ENCODE measurements at regions of chr10 and their contacts with region 1.

Region 1: GRCh38 chr10:73096449-73097304 is at the start of gene P4HA1:
- DNase-seq: peak; percentile 97
- H3K4me3 Mint-ChIP-seq: peak within 1 kb of the TSS; percentile 96
- H3K27ac Mint-ChIP-seq: peak within 1 kb of the TSS; percentile 94
- H3K4me1 Mint-ChIP-seq: peaks cover 46% of the 10 kb centered on the region
- H3K27me3 Mint-ChIP-seq: peaks cover 2% of the 10 kb centered on the region
- total RNA-seq, gene P4HA1: 52.8 and 54.5 TPM in 2 replicates

Region 2: GRCh38 chr10:73060738-73061635 is 35.7 kb before region 1 on chr10:
- intact Hi-C with region 1: loop called (anchors 1 kb)
- DNase-seq: no peak
- H3K4me3 Mint-ChIP-seq: no peak overlapping the region
- H3K27ac Mint-ChIP-seq: peak overlapping the region; percentile 18
- H3K4me1 Mint-ChIP-seq: peaks cover 19% of the 10 kb centered on the region
- H3K27me3 Mint-ChIP-seq: no peaks in the 10 kb centered on the region

Region 3: DNA sequence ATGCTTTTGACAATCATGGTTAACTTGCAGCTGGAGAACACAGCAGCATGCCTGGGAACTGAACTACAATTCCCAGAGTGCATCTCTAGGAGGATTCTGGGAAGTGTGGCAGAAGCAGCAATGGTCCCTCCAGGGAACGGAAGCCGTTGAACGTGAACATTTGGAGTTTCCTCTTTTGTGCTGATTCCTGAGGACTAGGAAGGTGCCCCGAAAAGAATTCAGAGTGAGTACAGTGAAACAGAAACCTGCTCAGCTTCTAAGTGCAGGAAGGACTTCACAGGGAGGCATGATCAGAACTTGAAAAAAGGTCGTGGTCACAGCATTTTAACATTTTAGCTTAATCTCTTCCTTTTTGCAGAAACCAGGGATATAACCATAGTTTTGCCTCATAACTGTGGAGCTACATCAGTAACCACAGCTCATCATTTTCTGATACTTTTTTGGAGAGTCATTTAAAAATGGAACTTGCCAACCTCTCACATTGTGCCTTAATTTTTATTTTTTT is 13.7 kb after region 1 on chr10 and contains the start of gene NUDT13:
- intact Hi-C with region 1: loop called (anchors 1 kb)
- DNase-seq: peak; percentile 26
- H3K4me3 Mint-ChIP-seq: peak within 1 kb of the TSS; percentile 87
- H3K27ac Mint-ChIP-seq: peak within 1 kb of the TSS; percentile 90
- H3K4me1 Mint-ChIP-seq: peaks cover 20% of the 10 kb centered on the region
- H3K27me3 Mint-ChIP-seq: no peaks in the 10 kb centered on the region
- total RNA-seq, gene NUDT13: 0.81 and 0.83 TPM in 2 replicates

Region 4: DNA sequence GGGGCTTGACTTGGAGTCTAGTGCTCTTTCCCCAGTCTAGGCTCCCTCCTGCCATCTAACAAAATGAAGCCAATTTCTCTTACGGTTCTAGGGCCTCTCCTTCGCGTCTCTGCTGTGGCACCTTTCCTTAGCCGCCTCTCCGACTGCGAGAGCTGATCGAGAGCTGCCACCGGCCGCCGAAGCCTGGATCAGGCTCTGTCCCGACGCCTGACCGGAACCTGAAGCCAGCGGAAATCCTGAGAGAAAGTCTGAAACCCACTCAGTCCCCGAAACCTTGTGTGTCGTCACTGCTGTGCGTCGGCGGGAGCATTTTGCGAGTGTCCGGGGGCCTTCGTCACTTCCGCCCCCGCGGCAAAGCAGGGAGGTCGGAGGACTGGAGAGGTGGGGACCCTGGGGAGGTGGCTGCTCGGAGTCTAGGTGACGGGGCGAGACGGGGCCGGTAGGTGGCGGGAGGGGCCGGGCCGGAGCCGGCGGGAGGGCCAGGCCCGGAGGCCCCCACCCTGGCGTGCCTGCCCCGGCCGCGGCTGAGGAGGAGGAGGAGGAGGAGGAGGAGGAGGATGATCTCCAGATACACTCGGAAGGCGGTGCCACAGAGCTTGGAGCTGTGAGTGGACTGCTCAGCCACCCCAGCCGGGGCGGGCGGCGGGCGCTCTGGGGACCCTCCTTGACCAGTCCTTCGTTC is 71.2 kb after region 1 on chr10 and contains the starts of genes ECD and FAM149B1:
- intact Hi-C with region 1: loop called (anchors 1 kb)
- DNase-seq: peak; percentile 91
- H3K4me3 Mint-ChIP-seq: peak within 1 kb of the TSS; percentile 99
- H3K27ac Mint-ChIP-seq: peak within 1 kb of the TSS; percentile 99
- H3K4me1 Mint-ChIP-seq: peaks cover 42% of the 10 kb centered on the region
- H3K27me3 Mint-ChIP-seq: no peaks in the 10 kb centered on the region
- total RNA-seq, gene ECD: 38.0 and 39.5 TPM in 2 replicates
- total RNA-seq, gene FAM149B1: 11.1 and 11.3 TPM in 2 replicates

Measured in activated T-helper 1 cell treated with anti-CD3 and anti-CD28 coated beads, Interleukin-12 subunit alpha, Interleukin-12 subunit beta, Interleukin-2, Interleukin-4 antibody, amounts not matched to agents 30 ng/mL and 10 ng/mL and 1 ng/mL, durations not matched to agents 14 hours and 24 hours and 36 hours (primary cell).